ENCODE measurements at regions of chr2 and their contacts with region 1.

Region 1: GRCh38 chr2:106596844-106597243 is 109.7 kb downstream of the CD8B2 start:
- DNase-seq: no peak
- H3K4me3 ChIP-seq: no peak overlapping the region
- H3K27ac ChIP-seq: no peak overlapping the region
- H3K4me1 ChIP-seq: no peaks in the 10 kb centered on the region
- H3K27me3 ChIP-seq: no peaks in the 10 kb centered on the region
- CTCF ChIP-seq: peak in 2 of 3 experiments; percentile 14 to 57; a peak in 2 of 4 replicates
- EP300 ChIP-seq: no peak
- POLR2A ChIP-seq: no peak
- RAD21 ChIP-seq: peak in 1 of 2 experiments; percentile 10; a peak in 1 of 4 replicates

Region 2: DNA sequence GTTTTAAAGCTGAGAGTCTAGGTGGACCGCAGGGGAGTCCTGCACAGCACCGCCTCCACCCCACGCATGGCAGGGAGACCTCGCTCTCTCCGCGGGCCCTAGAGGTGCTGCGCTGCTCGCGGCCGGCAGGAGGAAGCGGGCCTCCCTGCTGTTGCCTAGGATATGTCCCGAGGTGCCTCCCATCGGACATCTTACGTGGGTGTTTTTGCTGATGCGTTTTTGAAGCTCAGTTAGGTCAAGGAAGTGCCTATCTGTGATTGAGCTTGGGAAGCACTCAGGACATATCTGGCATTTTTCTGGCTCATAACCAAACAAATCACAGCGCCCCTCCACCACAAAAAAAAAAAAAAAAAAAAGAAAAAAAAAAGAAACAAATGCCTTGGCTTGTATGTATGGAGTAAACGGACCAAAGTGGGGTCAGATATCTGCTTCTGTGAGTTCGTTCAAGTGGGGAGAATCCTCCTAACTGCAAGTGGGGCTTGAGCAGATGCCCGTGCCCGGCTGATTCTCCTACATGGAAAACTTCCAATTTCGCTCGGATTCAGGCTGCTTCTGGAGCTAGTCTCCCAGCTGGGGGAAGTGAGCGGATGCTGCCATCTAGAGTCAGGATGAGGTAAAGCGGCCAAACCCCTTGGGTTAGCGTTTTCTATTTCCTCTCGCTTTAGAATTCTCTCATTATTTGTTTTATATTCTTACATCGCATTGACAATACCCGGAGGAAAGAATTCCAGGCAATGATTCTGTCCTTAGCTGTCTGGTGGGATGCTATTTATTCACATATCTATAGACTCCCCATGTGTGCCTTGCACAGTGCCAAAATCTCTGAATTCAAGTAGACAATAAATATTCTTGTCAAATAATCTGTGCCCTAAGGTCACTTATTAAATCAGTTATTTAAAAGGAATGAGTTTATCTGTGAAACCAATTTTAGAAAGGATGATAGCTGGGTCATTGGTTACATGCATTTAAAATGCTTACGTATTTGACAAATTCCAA is 14.4 kb before region 1 on chr2:
- CTCF ChIA-PET with region 1: interaction called, 19 read pairs
- POLR2A ChIA-PET with region 1: no interaction called
- DNase-seq: peak; percentile 51 to 83
- H3K4me3 ChIP-seq: peak overlapping the region; percentile 20 to 57 (median 39); a peak in 6 of 8 replicates
- H3K27ac ChIP-seq: no peak overlapping the region
- H3K4me1 ChIP-seq: no peaks in the 10 kb centered on the region
- H3K27me3 ChIP-seq: peaks cover 2 to 31% (median 12%) of the 10 kb centered on the region in 4 experiments
- CTCF ChIP-seq: peak; percentile 80 to 94 (median 88)
- EP300 ChIP-seq: no peak
- POLR2A ChIP-seq: no peak
- RAD21 ChIP-seq: peak; percentile 91 to 96

Region 3: DNA sequence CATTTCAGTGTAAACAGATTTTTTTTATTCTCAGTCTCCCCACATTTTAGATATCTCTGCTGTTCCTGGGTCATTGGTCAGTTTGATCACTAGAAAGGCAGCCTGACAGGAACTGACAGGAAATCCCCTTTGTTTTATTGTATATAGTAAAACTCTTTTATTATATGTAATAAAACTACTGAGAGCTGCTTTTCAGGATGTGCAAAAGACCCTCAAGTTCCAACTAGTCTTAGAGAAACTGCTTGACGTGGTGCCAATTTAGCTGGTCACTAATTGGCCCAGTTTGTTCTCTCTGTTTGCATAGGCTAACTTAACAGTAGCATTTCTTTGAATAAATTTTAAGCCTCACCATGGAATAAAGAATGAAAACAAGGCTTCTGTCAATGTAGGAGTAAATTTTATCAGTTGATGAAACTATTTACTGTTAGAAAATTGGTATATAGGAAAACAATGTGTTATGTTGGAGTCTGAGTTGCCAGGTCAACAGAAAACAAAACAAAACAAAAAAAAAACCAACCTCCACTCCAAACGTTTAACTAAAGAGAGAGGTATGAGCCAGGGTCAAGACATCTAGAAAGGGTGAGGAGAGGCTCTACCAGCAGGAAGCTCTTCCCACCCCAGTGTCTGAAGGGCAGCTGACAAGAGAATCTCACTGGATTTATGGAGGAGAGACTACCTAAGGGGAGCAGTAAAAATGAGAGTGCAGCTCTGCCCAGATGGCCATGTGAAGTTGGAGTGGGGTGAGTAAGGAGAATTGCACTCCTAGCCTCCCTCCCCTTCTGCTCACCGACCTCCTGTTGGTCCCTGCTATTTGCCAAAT is 104.6 kb after region 1 on chr2:
- CTCF ChIA-PET with region 1: no interaction called
- POLR2A ChIA-PET with region 1: no interaction called
- DNase-seq: no peak
- H3K4me3 ChIP-seq: no peak overlapping the region
- H3K27ac ChIP-seq: no peak overlapping the region
- H3K4me1 ChIP-seq: no peaks in the 10 kb centered on the region
- H3K27me3 ChIP-seq: no peaks in the 10 kb centered on the region
- CTCF ChIP-seq: no peak
- EP300 ChIP-seq: no peak
- POLR2A ChIP-seq: no peak
- RAD21 ChIP-seq: no peak

Measured in H1 (cell line).